ENCODE measurements at regions of chrX and their contacts with region 1.

Region 1: GRCh38 chrX:9885150-9885549 is 82.0 kb upstream of the CLDN34 start:
- DNase-seq: peak; percentile 79
- H3K4me3 ChIP-seq: no peak overlapping the region
- H3K27ac ChIP-seq: no peak overlapping the region
- H3K4me1 ChIP-seq: no peaks in the 10 kb centered on the region
- H3K27me3 ChIP-seq: no peaks in the 10 kb centered on the region
- CTCF ChIP-seq: peak in 1 of 3 experiments; percentile 38
- POLR2A ChIP-seq: no peak

Region 2: DNA sequence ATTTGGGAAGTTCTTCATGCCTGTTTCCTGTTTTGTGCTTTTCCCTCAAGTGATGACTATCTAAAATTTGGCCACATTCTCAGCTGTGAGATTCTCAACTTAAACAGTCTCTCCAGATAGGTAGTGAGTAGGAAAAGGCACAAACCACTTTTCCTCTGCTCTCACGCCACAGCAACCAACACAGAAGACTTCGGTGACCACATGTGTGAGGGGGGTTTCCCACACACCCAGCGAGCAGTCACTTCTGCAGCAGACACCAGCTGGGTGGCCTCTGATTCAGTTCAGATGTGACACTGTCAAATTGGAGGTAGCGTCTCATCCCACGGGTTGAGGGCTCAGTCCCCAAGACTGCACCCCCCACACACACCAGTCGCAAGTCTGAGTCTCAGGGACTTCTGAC is 56.9 kb after region 1 on chrX:
- intact Hi-C with region 1: no loop called
- DNase-seq: no peak
- H3K4me3 ChIP-seq: no peak overlapping the region
- H3K27ac ChIP-seq: no peak overlapping the region
- H3K4me1 ChIP-seq: no peaks in the 10 kb centered on the region
- H3K27me3 ChIP-seq: no peaks in the 10 kb centered on the region
- CTCF ChIP-seq: no peak
- POLR2A ChIP-seq: no peak

Region 3: DNA sequence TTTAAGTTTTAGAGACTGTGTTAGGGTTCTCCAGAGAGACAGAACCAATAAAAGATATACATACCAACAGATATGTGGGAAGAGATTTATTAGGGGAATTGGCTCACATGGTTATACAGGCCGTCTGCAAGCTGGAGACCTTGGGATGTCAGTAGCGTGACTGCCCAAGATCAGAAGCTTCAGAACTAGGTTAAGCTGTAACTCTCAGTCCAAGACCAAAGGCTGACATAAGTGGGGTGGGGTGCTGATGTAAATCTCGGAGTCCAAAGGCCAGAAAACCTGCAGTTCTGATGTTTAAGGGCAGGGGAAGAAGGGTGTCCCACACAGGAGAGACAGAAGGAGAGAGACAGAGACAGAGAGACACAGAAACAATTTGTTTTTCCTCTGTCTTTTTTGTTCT is 92.5 kb after region 1 on chrX:
- intact Hi-C with region 1: loop called (anchors 10 kb)
- DNase-seq: no peak
- H3K4me3 ChIP-seq: no peak overlapping the region
- H3K27ac ChIP-seq: no peak overlapping the region
- H3K4me1 ChIP-seq: no peaks in the 10 kb centered on the region
- H3K27me3 ChIP-seq: no peaks in the 10 kb centered on the region
- CTCF ChIP-seq: no peak
- POLR2A ChIP-seq: no peak

Measured in testis (tissue), 5 donors.